ENCODE measurements at regions of chr16 and their contacts with region 1.

Region 1: DNA sequence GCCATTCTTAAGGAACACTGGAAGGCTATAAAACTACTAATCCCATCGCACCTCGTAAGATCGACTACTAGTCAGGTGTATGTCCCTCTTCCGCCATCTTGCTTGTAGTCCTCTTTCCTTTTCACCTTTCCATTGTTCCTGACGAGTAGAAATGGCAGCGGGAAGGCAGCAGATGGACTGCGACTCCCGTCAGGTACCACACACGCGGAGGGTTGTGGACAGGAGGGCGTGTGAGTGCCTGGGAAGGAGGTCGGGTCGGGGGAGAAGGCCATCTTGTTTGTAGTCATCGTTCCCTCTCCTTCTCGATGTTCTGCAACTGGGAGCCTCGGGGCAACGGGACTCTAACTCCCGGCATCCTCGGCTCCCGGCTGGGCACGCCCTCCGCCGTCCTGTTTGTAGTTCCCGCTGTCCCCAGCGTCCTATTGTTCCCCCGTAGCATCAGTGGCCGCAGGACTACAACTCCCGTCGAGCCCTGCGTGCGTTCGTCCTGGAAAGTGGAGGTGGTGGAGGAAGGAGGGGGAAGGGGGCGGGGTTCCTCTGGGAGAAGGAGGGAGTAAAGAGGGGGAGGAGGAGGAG is 324 bp upstream of the FBXL19 start:
- DNase-seq: peak; percentile 99
- H3K4me3 Mint-ChIP-seq: peak overlapping the region; percentile 99
- H3K27ac Mint-ChIP-seq: peak overlapping the region; percentile 100
- H3K4me1 Mint-ChIP-seq: peaks cover 14% of the 10 kb centered on the region
- H3K27me3 Mint-ChIP-seq: no peaks in the 10 kb centered on the region

Region 2: GRCh38 chr16:30698139-30698815 is 224.8 kb before region 1 on chr16:
- CTCF ChIA-PET with region 1: no interaction called
- intact Hi-C with region 1: loop called (anchors 1 kb)
- DNase-seq: peak; percentile 100
- H3K4me3 Mint-ChIP-seq: peak overlapping the region; percentile 94
- H3K27ac Mint-ChIP-seq: peak overlapping the region; percentile 99
- H3K4me1 Mint-ChIP-seq: peaks cover 37% of the 10 kb centered on the region
- H3K27me3 Mint-ChIP-seq: no peaks in the 10 kb centered on the region

Region 3: DNA sequence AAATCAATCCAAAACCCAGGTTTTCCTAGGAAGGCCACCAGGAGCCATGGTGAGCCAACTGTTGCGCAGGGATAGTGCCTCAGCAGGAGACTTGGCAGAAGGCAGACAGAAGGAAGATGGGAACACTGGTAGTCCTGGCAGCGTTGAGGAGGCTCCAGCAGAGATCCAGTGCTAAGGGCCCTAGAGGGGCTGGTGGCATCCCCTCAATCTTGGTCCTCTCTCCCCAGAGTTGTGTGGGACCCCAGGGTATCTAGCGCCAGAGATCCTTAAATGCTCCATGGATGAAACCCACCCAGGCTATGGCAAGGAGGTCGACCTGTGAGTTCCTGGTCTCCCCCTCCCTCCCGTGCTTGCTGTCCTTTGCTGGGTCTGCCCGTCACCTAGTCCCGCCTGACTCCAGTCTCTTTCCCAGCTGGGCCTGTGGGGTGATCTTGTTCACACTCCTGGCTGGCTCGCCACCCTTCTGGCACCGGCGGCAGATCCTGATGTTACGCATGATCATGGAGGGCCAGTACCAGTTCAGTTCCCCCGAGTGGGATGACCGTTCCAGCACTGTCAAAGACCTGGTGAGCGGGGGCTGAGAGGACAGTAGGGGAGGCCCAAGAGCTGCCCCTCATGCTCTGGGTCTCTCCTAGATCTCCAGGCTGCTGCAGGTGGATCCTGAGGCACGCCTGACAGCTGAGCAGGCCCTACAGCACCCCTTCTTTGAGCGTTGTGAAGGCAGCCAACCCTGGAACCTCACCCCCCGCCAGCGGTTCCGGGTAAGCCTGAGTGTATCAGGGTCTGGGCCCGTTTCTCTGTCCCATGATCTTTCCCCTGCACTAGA is 166.9 kb before region 1 on chr16:
- CTCF ChIA-PET with region 1: no interaction called
- intact Hi-C with region 1: no loop called
- DNase-seq: no peak
- H3K4me3 Mint-ChIP-seq: no peak overlapping the region
- H3K27ac Mint-ChIP-seq: no peak overlapping the region
- H3K4me1 Mint-ChIP-seq: peaks cover 8% of the 10 kb centered on the region
- H3K27me3 Mint-ChIP-seq: no peaks in the 10 kb centered on the region

Region 4: GRCh38 chr16:30813821-30814189 is 109.2 kb before region 1 on chr16:
- CTCF ChIA-PET with region 1: interaction called, 4 read pairs
- intact Hi-C with region 1: loop called (anchors 1 kb)
- DNase-seq: no peak
- H3K4me3 Mint-ChIP-seq: peak overlapping the region; percentile 76
- H3K27ac Mint-ChIP-seq: peak overlapping the region; percentile 38
- H3K4me1 Mint-ChIP-seq: peaks cover 14% of the 10 kb centered on the region
- H3K27me3 Mint-ChIP-seq: no peaks in the 10 kb centered on the region

Region 5: GRCh38 chr16:30902029-30902972 is 20.7 kb before region 1 on chr16:
- CTCF ChIA-PET with region 1: interaction called, 8 read pairs
- intact Hi-C with region 1: loop called (anchors 1 kb)
- DNase-seq: peak; percentile 54
- H3K4me3 Mint-ChIP-seq: peak overlapping the region; percentile 98
- H3K27ac Mint-ChIP-seq: peak overlapping the region; percentile 98
- H3K4me1 Mint-ChIP-seq: peaks cover 29% of the 10 kb centered on the region
- H3K27me3 Mint-ChIP-seq: no peaks in the 10 kb centered on the region

Region 6: GRCh38 chr16:31073968-31074813 is 151.1 kb after region 1 on chr16 and contains the starts of genes ZNF646 and ZNF668:
- CTCF ChIA-PET with region 1: no interaction called
- intact Hi-C with region 1: loop called (anchors 1 kb)
- DNase-seq: peak; percentile 99
- H3K4me3 Mint-ChIP-seq: peak within 1 kb of the TSS; percentile 94
- H3K27ac Mint-ChIP-seq: peak within 1 kb of the TSS; percentile 93
- H3K4me1 Mint-ChIP-seq: peaks cover 31% of the 10 kb centered on the region
- H3K27me3 Mint-ChIP-seq: no peaks in the 10 kb centered on the region
- total RNA-seq, gene ZNF646: 16.7 to 17.4 TPM
- total RNA-seq, gene ZNF668: 9.5 to 10.1 TPM

Measured in activated naive CD4-positive, alpha-beta T cell treated with anti-CD3 and anti-CD28 coated beads for 36 hours (primary cell).